ENCODE measurements at regions of chr5 and their contacts with region 1.

Region 1: GRCh38 chr5:43105369-43106289 is 15.1 kb upstream of the ZNF131 start:
- DNase-seq: peak; percentile 94
- ATAC-seq: peak; percentile 97
- H3K4me3 ChIP-seq: peak overlapping the region; percentile 58 to 85 (median 66)
- H3K4me3 Mint-ChIP-seq: peak overlapping the region; percentile 90
- H3K27ac ChIP-seq: peak overlapping the region; percentile 49 to 71
- H3K27ac Mint-ChIP-seq: peak overlapping the region; percentile 83
- H3K4me1 ChIP-seq: peaks cover 0 to 12% of the 10 kb centered on the region in 2 donors
- H3K4me1 Mint-ChIP-seq: peaks cover 11% of the 10 kb centered on the region
- H3K27me3 ChIP-seq: no peaks in the 10 kb centered on the region
- H3K27me3 Mint-ChIP-seq: no peaks in the 10 kb centered on the region
- CTCF ChIP-seq: peak; percentile 100

Region 2: DNA sequence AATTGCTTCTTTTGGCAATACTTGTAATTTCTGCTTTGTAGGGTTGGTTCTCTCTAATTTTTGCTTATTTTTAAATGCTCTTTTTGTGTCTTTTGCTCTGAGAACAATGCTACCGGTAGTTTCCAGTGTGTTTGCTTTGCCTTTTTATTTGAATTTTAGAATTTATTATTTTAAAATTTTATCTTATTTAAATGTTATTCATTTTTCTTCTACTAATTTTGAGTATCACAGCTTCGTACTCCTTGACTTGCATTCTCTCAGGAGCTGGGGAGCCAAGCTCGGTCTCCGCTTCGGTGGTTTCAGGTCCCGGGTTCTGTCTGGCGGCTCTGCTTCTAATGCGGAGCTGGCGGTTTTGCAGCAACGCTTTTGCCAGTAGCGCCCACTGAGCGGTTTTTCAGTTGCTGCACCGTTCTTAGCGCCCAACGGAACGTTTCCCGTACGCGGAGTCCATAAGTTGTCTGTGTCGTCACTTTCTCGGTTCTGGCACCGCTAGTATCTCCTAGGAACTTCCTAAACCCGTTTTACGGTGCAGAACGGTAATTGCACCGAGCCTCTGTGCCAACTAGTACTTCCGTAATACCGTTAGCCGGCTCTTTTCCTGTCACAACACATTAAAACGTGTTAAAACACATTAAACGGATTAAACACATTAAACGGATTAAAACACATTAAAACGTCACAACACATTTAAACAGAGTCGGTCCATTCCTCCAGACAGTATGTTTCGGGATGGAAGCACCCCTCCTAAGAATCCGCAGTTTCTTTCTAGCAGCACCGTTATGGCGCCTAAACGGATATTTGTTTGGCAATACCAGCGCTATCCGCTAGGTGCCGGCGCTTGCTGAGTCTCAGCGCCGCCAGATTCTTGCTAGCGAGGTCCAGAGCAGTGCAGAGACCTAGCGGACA is 111.1 kb before region 1 on chr5:
- CTCF ChIA-PET with region 1: interaction called, 4 read pairs
- POLR2A ChIA-PET with region 1: interaction called, 4 read pairs
- intact Hi-C with region 1: loop called (anchors 1 kb)
- DNase-seq: peak; percentile 94
- ATAC-seq: peak; percentile 67
- H3K4me3 ChIP-seq: peak overlapping the region; percentile 78 to 97 (median 89)
- H3K4me3 Mint-ChIP-seq: peak overlapping the region; percentile 96
- H3K27ac ChIP-seq: peak overlapping the region; percentile 93 to 96
- H3K27ac Mint-ChIP-seq: peak overlapping the region; percentile 100
- H3K4me1 ChIP-seq: peaks cover 23 to 30% of the 10 kb centered on the region in 2 donors
- H3K4me1 Mint-ChIP-seq: peaks cover 32% of the 10 kb centered on the region
- H3K27me3 ChIP-seq: peaks cover 0 to 9% (median 1%) of the 10 kb centered on the region in 4 experiments
- H3K27me3 Mint-ChIP-seq: no peaks in the 10 kb centered on the region
- CTCF ChIP-seq: peak; percentile 84

Region 3: DNA sequence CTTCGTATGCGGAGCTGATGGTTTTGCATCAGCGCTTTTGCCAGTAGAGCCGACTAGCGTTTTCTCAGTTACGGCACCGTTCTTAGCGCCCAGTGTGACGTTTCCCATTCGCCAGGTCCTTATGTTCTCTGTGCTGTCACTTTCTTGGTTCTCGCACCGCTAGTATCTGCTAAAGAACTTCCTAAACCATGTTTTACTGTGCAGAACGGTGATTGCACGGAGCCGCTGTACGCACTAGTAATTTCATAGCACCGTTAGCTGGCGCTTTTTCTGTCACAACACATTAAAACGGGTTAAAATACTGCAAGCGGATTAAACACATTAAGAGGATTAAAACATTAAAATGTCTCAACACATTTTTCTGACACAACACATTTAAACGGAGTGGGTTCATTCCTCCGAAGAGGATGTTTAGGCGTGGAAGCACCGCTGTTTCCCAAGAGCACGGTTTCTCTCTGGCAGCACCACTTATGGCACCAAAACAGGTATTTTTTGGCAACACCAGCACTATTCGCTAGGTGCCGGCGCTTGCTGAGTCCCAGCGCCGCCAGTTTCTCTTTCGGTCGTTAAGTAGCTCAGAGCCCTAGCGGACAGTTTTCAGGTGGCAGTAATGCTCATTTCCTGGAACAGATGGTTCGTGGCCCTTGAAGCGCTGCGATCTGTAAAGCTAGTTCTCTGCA is 85.9 kb before region 1 on chr5:
- CTCF ChIA-PET with region 1: interaction called, 11 read pairs
- POLR2A ChIA-PET with region 1: interaction called, 11 read pairs
- intact Hi-C with region 1: loop called (anchors 1 kb)
- DNase-seq: peak; percentile 94
- ATAC-seq: peak; percentile 63
- H3K4me3 ChIP-seq: peak overlapping the region; percentile 63 to 99 (median 80)
- H3K4me3 Mint-ChIP-seq: peak overlapping the region; percentile 99
- H3K27ac ChIP-seq: peak overlapping the region; percentile 96 to 98
- H3K27ac Mint-ChIP-seq: peak overlapping the region; percentile 100
- H3K4me1 ChIP-seq: peaks cover 25 to 32% of the 10 kb centered on the region in 2 donors
- H3K4me1 Mint-ChIP-seq: peaks cover 42% of the 10 kb centered on the region
- H3K27me3 ChIP-seq: no peaks in the 10 kb centered on the region
- H3K27me3 Mint-ChIP-seq: no peaks in the 10 kb centered on the region
- CTCF ChIP-seq: peak; percentile 77

Region 4: DNA sequence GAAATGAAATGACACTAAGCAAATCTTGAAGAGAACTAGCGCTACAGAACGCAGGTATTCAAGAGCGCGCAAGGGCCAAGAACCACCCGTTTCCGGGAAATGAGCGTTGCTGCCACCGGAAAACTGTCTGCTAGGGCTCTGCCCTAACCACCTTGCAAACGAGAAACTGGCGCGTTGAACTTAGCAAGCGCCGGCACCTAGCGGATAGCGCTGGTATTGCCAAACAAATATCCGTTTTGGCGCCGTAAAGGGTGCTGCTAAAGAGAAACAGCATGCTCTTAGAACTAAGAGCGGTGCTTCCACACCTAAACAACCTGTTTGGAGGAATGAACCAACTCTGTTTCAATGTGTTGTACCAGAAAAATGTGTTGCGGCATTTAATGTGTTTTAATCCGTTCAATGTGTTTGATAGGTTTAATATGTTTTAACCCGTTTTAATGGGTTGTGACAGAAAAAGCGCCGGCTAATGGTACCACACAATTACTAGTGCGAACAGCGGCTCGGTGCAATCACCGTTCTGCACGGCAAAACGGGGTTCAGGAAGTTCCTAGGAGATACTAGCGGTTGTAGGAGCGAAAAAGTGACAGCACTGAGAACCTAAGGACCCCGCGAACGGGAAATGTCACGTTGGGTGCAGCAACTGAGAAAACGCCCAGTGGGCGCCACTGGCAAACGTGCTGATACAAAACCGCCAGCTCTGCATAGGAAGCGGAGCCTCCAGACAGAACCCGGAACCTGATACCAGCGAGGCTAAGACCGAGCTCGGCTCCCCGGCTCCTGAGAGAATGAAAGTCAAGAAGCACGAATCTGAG is 65.1 kb before region 1 on chr5 and contains the start of gene ANXA2R:
- CTCF ChIA-PET with region 1: interaction called, 18 read pairs
- POLR2A ChIA-PET with region 1: no interaction called
- intact Hi-C with region 1: loop called (anchors 1 kb)
- DNase-seq: peak; percentile 97
- ATAC-seq: peak; percentile 60
- H3K4me3 ChIP-seq: peak within 1 kb of the TSS; percentile 62 to 95 (median 81)
- H3K4me3 Mint-ChIP-seq: peak within 1 kb of the TSS; percentile 97
- H3K27ac ChIP-seq: peak within 1 kb of the TSS; percentile 98 to 99
- H3K27ac Mint-ChIP-seq: peak within 1 kb of the TSS; percentile 98
- H3K4me1 ChIP-seq: peaks cover 25 to 44% of the 10 kb centered on the region in 2 donors
- H3K4me1 Mint-ChIP-seq: peaks cover 39% of the 10 kb centered on the region
- H3K27me3 ChIP-seq: no peaks in the 10 kb centered on the region
- H3K27me3 Mint-ChIP-seq: no peaks in the 10 kb centered on the region
- CTCF ChIP-seq: peak; percentile 86
- total RNA-seq, gene ANXA2R: 19.3 and 20.0 TPM in 2 replicates

Region 5: GRCh38 chr5:43085453-43085852 is 20.2 kb before region 1 on chr5:
- CTCF ChIA-PET with region 1: interaction called, 13 read pairs
- POLR2A ChIA-PET with region 1: no interaction called
- intact Hi-C with region 1: no loop called
- DNase-seq: no peak
- ATAC-seq: no peak
- H3K4me3 ChIP-seq: no peak overlapping the region
- H3K4me3 Mint-ChIP-seq: no peak overlapping the region
- H3K27ac ChIP-seq: no peak overlapping the region
- H3K27ac Mint-ChIP-seq: no peak overlapping the region
- H3K4me1 ChIP-seq: no peaks in the 10 kb centered on the region
- H3K4me1 Mint-ChIP-seq: no peaks in the 10 kb centered on the region
- H3K27me3 ChIP-seq: no peaks in the 10 kb centered on the region
- H3K27me3 Mint-ChIP-seq: no peaks in the 10 kb centered on the region
- CTCF ChIP-seq: no peak

Region 6: GRCh38 chr5:43389679-43390329 is 284.2 kb after region 1 on chr5:
- CTCF ChIA-PET with region 1: interaction called, 21 read pairs
- POLR2A ChIA-PET with region 1: no interaction called
- intact Hi-C with region 1: loop called (anchors 1 kb)
- DNase-seq: peak; percentile 73
- ATAC-seq: peak; percentile 61
- H3K4me3 ChIP-seq: no peak overlapping the region
- H3K4me3 Mint-ChIP-seq: no peak overlapping the region
- H3K27ac ChIP-seq: no peak overlapping the region
- H3K27ac Mint-ChIP-seq: no peak overlapping the region
- H3K4me1 ChIP-seq: no peaks in the 10 kb centered on the region
- H3K4me1 Mint-ChIP-seq: peaks cover 17% of the 10 kb centered on the region
- H3K27me3 ChIP-seq: no peaks in the 10 kb centered on the region
- H3K27me3 Mint-ChIP-seq: no peaks in the 10 kb centered on the region
- CTCF ChIP-seq: peak; percentile 91